Heart left ventricle (tissue), 16 donors: ENCODE measurements at regions of chr9 and their contacts with region 1.

Region 1: GRCh38 chr9:68999393-69000105 is 14.4 kb downstream of the PRKACG start:
- DNase-seq: peak in 4 of 5 donors; percentile 52 to 72 (median 62)
- ATAC-seq: peak; percentile 82 to 93 (median 92)
- H3K4me3 ChIP-seq: no peak overlapping the region
- H3K27ac ChIP-seq: peak overlapping the region in 10 of 12 donors; percentile 9 to 69 (median 62)
- H3K4me1 ChIP-seq: peaks cover 0 to 41% (median 20%) of the 10 kb centered on the region in 12 donors
- H3K27me3 ChIP-seq: no peaks in the 10 kb centered on the region
- CTCF ChIP-seq: peak; percentile 72 to 87 (median 77)
- POLR2A ChIP-seq: no peak

Region 2: DNA sequence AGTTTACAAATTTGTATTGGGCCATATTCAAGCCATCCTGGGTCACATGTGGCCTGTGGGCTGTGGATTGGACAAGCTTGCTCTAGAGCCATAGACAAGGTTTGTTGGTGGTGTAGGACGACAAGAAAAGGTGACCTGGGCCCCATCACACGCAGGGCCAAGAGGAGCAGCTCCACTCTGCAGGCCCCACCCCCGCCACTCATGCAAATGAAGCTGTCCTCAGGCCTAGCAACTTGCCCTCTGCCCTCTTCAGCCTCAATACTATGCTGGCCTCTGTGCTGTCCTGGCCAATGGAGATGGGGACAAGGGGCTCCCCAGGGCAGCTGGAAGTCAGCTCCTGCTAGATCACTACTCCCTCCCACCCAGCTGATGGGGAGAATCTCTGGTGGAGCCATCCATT is 403.7 kb before region 1 on chr9:
- intact Hi-C with region 1: loop called in 1 of 10 experiments (anchors 5 kb)
- DNase-seq: no peak
- ATAC-seq: no peak
- H3K4me3 ChIP-seq: no peak overlapping the region
- H3K27ac ChIP-seq: no peak overlapping the region
- H3K4me1 ChIP-seq: no peaks in the 10 kb centered on the region
- H3K27me3 ChIP-seq: no peaks in the 10 kb centered on the region
- CTCF ChIP-seq: no peak
- POLR2A ChIP-seq: no peak

Region 3: GRCh38 chr9:68704814-68705530 is 294.6 kb before region 1 on chr9 and contains the start of gene PIP5K1B:
- intact Hi-C with region 1: loop called in 6 of 10 experiments (anchors 2 to 10 kb)
- DNase-seq: peak; percentile 76 to 87 (median 84)
- ATAC-seq: peak; percentile 57 to 92 (median 86)
- H3K4me3 ChIP-seq: peak within 1 kb of the TSS; percentile 44 to 94 (median 68)
- H3K27ac ChIP-seq: peak within 1 kb of the TSS; percentile 71 to 95 (median 88)
- H3K4me1 ChIP-seq: peaks cover 0 to 31% (median 12%) of the 10 kb centered on the region in 12 donors
- H3K27me3 ChIP-seq: peaks cover 0 to 24% (median 5%) of the 10 kb centered on the region in 9 donors
- CTCF ChIP-seq: peak in 4 of 12 donors; percentile 19 to 36 (median 24)
- POLR2A ChIP-seq: peak in 1 of 2 donors; percentile 59
- total RNA-seq, gene PIP5K1B: 28.0 to 68.0 (median 47.5) TPM

Region 4: DNA sequence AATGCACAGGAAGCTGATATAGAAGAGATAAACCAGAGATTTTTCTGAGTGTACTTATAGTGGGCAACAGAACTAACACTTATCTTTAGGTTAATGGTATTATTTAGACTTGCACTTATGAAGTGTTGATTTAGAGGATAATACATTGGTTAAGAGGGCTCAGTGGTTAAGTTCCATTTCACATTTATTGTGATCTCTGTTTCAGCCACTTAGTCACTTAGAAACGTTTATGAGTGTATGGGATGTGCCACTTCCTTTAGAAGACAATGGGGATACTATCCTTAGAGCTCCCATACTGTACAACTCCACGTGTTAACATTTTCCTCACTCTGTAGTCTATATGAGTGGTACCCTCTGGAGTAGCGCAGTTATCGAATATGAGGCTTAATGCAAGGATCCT is 237.0 kb before region 1 on chr9:
- intact Hi-C with region 1: no loop called
- DNase-seq: no peak
- ATAC-seq: peak in 1 of 4 donors; percentile 18
- H3K4me3 ChIP-seq: no peak overlapping the region
- H3K27ac ChIP-seq: no peak overlapping the region
- H3K4me1 ChIP-seq: peaks cover 0 to 44% (median 7%) of the 10 kb centered on the region in 12 donors
- H3K27me3 ChIP-seq: no peaks in the 10 kb centered on the region
- CTCF ChIP-seq: no peak
- POLR2A ChIP-seq: no peak

Region 5: DNA sequence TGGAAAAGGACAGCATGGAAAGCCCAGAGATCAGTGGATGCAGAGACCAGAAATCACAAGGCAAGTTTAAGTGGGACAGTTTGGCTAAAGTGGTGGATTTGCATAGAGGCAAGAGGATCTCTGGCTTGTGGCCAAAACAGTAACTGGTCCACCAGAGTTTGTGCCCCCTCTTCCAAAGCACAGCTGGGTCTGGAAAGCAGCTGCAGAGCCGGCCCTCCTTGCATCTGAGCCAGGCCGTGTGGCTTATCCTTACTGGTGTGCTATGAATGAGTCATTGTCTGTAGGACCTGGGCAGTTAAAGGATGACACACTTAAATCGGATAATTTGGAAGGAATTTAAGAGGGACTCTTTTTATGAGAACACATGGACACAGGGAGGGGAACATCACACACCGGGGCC is 147.9 kb before region 1 on chr9:
- intact Hi-C with region 1: loop called in 3 of 10 experiments (anchors 5 to 10 kb)
- DNase-seq: no peak
- ATAC-seq: peak in 3 of 4 donors; percentile 44 to 68 (median 65)
- H3K4me3 ChIP-seq: no peak overlapping the region
- H3K27ac ChIP-seq: no peak overlapping the region
- H3K4me1 ChIP-seq: peaks cover 0 to 15% (median 0%) of the 10 kb centered on the region in 12 donors
- H3K27me3 ChIP-seq: no peaks in the 10 kb centered on the region
- CTCF ChIP-seq: no peak
- POLR2A ChIP-seq: no peak

Region 6: GRCh38 chr9:68895741-68896478 is 103.6 kb before region 1 on chr9:
- intact Hi-C with region 1: loop called in 1 of 10 experiments (anchors 5 kb)
- DNase-seq: no peak
- ATAC-seq: peak in 3 of 4 donors; percentile 27 to 64 (median 47)
- H3K4me3 ChIP-seq: peak overlapping the region in 4 of 12 donors; percentile 1 to 27 (median 10)
- H3K27ac ChIP-seq: peak overlapping the region in 10 of 12 donors; percentile 25 to 63 (median 47)
- H3K4me1 ChIP-seq: peaks cover 0 to 47% (median 32%) of the 10 kb centered on the region in 12 donors
- H3K27me3 ChIP-seq: no peaks in the 10 kb centered on the region
- CTCF ChIP-seq: no peak
- POLR2A ChIP-seq: no peak

Region 7: DNA sequence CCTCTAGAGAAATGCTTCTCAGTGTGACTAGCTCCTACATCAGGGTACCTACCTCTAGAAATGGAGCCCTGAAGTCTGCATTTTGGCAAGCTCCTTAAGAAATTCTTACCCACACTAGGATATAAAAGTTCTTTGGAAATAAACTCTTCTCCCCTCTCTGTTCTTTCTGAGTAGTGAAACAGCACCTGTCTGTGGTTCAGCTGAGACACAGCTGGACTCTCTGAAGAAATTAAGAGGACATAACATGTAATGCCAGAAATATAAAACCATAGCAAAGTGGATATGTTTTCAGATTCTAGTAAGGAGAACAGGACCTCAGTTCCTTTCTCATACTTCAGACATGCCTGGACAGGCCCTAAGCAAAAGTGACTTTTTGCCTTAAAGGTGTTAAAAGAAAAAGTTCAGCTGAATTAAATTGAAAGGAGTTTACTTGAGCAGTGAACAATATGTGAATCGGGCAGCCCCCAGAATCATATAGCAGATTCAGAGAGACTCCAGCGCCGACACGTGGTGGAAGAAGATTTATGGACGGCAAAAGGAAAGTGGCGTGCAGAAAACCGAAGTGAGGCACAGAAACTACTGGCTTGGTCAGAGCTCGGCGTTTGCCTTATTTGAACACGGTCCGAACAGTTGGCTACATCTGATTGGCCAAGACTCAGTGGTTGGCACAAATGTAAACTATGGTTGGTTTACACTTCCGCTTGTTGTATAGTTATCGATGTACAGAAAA is 50.1 kb before region 1 on chr9:
- intact Hi-C with region 1: loop called in 1 of 10 experiments (anchors 10 kb)
- DNase-seq: no peak
- ATAC-seq: peak in 3 of 4 donors; percentile 7 to 52 (median 38)
- H3K4me3 ChIP-seq: no peak overlapping the region
- H3K27ac ChIP-seq: no peak overlapping the region
- H3K4me1 ChIP-seq: peaks cover 0 to 7% (median 0%) of the 10 kb centered on the region in 12 donors
- H3K27me3 ChIP-seq: no peaks in the 10 kb centered on the region
- CTCF ChIP-seq: peak in 7 of 12 donors; percentile 9 to 28 (median 16)
- POLR2A ChIP-seq: no peak

Region 8: GRCh38 chr9:68966496-68966944 is 33.0 kb before region 1 on chr9:
- intact Hi-C with region 1: no loop called
- DNase-seq: no peak
- ATAC-seq: no peak
- H3K4me3 ChIP-seq: no peak overlapping the region
- H3K27ac ChIP-seq: no peak overlapping the region
- H3K4me1 ChIP-seq: peaks cover 0 to 42% (median 10%) of the 10 kb centered on the region in 12 donors
- H3K27me3 ChIP-seq: no peaks in the 10 kb centered on the region
- CTCF ChIP-seq: no peak
- POLR2A ChIP-seq: no peak